Left lung (tissue), 14 donors: ENCODE measurements at regions of chr17 and their contacts with region 1.

Region 1: GRCh38 chr17:56592487-56593085 is 913 bp upstream of the NOG start:
- DNase-seq: peak; percentile 45 to 92 (median 64)
- ATAC-seq: peak; percentile 85
- H3K4me3 ChIP-seq: peak overlapping the region; percentile 31 to 47
- H3K27ac ChIP-seq: peak overlapping the region in 1 of 2 donors; percentile 39
- H3K4me1 ChIP-seq: peaks cover 10 to 48% of the 10 kb centered on the region in 2 donors
- H3K27me3 ChIP-seq: peaks cover 26 to 90% of the 10 kb centered on the region in 2 donors
- CTCF ChIP-seq: peak; percentile 95 to 98

Region 2: GRCh38 chr17:56521104-56521777 is 71.3 kb before region 1 on chr17:
- intact Hi-C with region 1: no loop called
- DNase-seq: peak in 1 of 4 donors; percentile 21
- ATAC-seq: no peak
- H3K4me3 ChIP-seq: no peak overlapping the region
- H3K27ac ChIP-seq: no peak overlapping the region
- H3K4me1 ChIP-seq: no peaks in the 10 kb centered on the region
- H3K27me3 ChIP-seq: no peaks in the 10 kb centered on the region
- CTCF ChIP-seq: no peak

Region 3: DNA sequence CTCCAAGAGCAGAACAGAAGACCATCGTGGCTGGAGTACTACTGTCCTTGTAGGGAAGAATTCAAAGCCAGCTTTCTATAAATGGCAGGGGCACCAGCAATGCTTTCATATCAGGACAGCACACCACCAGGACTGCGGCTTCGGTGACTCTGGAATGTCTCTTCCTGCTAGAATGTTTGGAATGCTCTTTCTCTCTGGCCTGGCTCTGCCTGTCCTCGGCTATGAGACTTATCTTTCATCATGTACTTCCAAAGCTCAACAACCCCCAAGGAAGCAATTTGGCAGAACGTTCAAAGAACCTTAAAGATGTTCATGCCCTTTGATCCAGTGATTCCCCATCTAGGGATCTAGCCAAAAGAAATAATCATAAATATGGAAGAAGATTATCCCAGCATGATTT is 51.8 kb before region 1 on chr17:
- intact Hi-C with region 1: no loop called
- DNase-seq: no peak
- ATAC-seq: no peak
- H3K4me3 ChIP-seq: no peak overlapping the region
- H3K27ac ChIP-seq: no peak overlapping the region
- H3K4me1 ChIP-seq: no peaks in the 10 kb centered on the region
- H3K27me3 ChIP-seq: no peaks in the 10 kb centered on the region
- CTCF ChIP-seq: no peak

Region 4: GRCh38 chr17:56710986-56711385 is 118.4 kb after region 1 on chr17:
- intact Hi-C with region 1: loop called in 1 of 2 experiments (anchors 5 kb)
- DNase-seq: no peak
- ATAC-seq: no peak
- H3K4me3 ChIP-seq: no peak overlapping the region
- H3K27ac ChIP-seq: no peak overlapping the region
- H3K4me1 ChIP-seq: no peaks in the 10 kb centered on the region
- H3K27me3 ChIP-seq: no peaks in the 10 kb centered on the region
- CTCF ChIP-seq: no peak

Region 5: GRCh38 chr17:56779898-56780733 is 187.5 kb after region 1 on chr17:
- intact Hi-C with region 1: loop called in 1 of 2 experiments (anchors 10 kb)
- DNase-seq: peak; percentile 59 to 99 (median 80)
- ATAC-seq: peak; percentile 100
- H3K4me3 ChIP-seq: peak overlapping the region in 1 of 2 donors; percentile 24
- H3K27ac ChIP-seq: no peak overlapping the region
- H3K4me1 ChIP-seq: peaks cover 0 to 15% of the 10 kb centered on the region in 2 donors
- H3K27me3 ChIP-seq: peaks cover 0 to 28% of the 10 kb centered on the region in 2 donors
- CTCF ChIP-seq: peak; percentile 99 to 100